ENCODE measurements at regions of chr5 and their contacts with region 1.

Region 1: GRCh38 chr5:139422307-139422893 is 16.9 kb downstream of the DNAJC18 start:
- ATAC-seq: peak; percentile 60 to 94 (median 78)
- H3K4me3 ChIP-seq: no peak overlapping the region
- H3K27ac ChIP-seq: no peak overlapping the region
- H3K4me1 ChIP-seq: peaks cover 0 to 5% of the 10 kb centered on the region in 2 donors

Region 2: DNA sequence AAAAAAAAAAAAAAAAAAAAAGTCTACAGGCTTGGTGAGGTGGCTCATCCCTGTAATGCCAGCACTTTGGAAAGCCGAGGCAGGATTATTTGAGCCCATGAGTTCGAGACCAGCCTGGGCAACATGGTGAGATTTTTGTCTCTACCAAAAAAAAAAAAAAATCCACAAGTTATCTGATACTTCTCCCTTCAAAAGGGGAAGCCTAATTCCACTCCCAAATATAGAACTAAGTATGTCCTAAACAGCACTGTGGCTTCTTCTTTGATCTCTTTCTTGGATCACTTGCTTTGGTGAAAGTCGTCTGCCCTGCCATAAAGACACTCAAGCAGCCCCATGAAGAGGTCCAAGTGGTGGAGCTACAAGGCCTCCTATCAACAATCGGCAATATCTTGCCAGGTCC is 79.0 kb after region 1 on chr5:
- in situ Hi-C with region 1: loop called in 1 of 9 experiments (anchors 10 kb)
- ATAC-seq: no peak
- H3K4me3 ChIP-seq: no peak overlapping the region
- H3K27ac ChIP-seq: no peak overlapping the region
- H3K4me1 ChIP-seq: peaks cover 8 to 11% of the 10 kb centered on the region in 2 donors

Region 3: DNA sequence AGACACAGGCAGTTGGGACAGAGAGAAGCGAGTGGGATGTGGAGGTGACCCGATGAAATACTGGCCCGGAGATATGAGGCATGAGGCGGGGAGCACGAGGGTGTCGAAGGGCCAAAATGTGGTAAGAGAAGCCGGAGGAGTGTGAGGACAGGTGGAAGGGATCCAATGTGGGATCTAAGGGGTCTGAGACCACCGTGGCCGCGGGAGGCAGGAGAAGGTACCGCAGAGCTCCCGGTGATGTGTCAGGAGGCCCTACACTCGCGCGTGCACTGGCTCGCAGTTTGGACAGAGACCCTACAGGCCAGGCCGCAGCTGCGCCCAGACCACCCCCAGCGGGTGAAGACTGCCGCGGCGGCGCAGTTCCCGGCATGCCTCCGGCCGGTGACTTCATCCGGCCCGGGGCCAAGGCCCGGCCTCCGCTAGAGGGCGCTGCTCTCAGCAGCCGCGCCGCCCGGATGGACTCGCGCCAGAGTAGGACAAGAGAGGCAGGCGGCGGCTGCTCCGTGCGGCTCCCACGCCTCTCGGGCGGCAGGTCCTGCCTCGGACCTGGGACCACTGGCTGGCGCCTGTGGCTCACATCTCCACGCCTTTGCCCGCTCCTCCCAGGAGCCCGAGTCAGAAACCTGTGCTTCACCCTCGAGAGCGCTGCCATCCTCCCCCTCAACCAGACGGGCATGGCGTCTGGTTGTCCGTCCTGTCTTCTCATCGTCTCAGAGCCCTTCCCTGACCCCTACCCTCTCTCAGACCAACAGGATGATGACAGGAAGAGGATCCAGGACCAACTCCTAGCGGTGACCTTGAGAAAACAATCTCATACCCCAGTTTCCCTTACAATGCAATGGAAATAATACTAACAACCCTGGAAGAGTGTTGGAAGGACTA is 95.5 kb after region 1 on chr5:
- in situ Hi-C with region 1: loop called in 2 of 9 experiments (anchors 10 kb)
- ATAC-seq: peak; percentile 76 to 97 (median 96)
- H3K4me3 ChIP-seq: peak overlapping the region; percentile 15 to 40 (median 27)
- H3K27ac ChIP-seq: peak overlapping the region; percentile 78 to 84
- H3K4me1 ChIP-seq: peaks cover 9 to 10% of the 10 kb centered on the region in 2 donors

Region 4: DNA sequence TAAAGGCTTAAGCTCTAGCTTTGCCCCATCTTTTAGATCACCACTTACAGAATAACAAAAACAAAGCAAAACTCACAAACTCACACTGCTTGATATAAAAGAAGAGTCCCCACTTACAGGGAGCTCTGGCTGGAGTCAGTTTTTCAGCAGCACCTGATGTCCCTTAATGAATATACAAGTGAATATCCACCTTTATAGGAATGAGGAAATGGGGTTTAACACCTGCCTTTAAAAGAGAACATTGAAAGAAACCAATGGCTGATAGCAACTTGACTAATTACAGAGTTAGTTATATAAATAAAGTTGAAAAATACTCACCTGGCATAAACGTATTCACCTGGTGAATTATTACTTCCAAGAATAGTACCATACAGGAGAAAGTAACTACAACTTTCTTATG is 670.8 kb after region 1 on chr5:
- in situ Hi-C with region 1: no loop called
- ATAC-seq: no peak
- H3K4me3 ChIP-seq: no peak overlapping the region
- H3K27ac ChIP-seq: no peak overlapping the region
- H3K4me1 ChIP-seq: no peaks in the 10 kb centered on the region